Posterior cingulate gyrus (tissue), 11 donors: ENCODE measurements at regions of chr10 and their contacts with region 1.

Region 1: DNA sequence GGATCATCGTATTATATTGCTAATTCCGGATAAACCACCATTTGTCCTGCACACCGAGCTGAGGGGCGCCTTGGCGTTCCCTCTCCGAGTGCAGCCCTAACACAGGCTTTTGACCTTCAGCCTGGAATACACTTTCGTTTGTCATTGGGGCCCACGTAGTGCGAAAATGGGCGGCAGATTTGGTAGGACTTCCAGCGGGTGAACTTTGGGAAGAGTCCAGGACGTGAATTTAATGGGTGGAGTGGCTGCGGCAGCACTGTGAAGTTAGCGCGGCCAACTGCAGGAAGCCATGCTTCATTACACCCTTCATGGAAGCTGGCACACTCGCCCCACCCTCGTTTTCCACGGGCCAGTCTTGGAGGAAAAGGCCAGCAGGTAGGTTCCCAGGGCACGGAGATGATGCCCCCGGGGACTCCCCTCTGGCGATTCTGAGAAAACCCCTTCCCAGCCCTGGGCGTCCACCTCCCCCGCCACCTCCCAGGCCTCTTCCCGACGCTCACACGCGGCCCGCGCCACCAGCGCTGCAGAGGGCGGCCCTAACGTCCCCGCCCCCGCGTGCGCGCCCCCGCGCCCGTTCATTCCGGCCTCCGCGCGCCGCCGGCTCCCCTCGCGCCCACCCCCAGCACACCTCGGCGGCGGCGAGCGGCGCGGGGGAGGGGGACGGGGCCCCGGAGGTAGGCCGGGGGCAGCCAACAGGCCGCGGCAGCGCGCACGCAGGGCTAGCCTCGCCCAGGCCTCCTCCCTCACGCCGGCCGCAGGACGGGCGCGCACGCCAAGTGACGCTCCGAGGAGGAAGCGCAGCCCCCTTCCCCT is at the start of gene MLLT10:
- DNase-seq: peak; percentile 84 to 99 (median 92)

Region 2: DNA sequence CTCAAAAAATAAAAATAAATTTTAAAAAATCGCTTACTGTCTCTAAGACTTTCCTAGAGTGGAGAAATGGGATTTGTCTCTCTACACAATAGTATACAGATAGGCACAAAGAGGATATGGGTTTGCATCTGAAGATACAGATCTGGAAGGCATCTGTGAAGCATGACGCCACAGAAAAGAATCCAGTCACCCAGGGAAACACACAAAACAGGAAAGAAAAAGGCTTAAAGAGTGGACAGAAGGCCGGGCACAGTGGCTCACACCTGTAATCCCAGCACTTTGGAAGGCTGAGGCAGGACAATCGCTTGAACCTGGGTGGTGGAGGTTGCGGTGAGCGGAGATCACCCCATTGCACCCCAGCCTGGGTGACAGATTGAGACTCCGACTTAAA is 69.5 kb before region 1 on chr10:
- intact Hi-C with region 1: no loop called
- DNase-seq: peak in 1 of 10 donors; percentile 43

Region 3: DNA sequence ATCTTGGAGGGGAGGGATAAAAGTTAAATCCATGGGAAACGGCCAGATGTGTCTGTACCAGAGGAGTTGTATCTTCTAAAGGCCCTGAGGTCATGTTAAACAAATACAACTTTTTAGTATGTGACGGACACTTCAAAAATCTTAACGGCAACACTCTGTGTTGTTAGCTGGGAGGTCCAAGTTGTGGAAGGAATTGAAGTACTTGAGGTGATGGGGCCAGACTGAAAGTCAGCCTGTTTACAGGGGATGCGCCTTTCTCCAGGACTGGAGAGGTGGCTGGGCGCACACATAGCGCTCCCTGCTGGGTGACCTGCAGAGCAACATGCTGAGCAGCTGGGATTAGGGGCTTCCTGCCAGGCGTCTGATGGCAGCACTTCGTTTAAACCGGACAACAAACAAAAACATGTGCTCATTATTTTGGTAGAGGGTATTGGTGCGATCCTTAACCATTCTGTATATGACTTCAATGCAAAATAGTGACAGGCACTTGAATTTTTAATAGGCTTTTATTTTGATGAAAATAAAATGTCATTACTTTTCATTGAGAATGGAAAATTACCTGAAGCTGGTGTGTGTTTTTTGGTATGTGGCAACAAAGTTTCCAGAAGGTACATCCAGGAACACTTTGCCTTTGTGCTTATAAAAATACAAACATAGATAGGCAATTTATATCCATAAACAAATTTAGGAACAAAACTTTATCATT is 198.5 kb after region 1 on chr10:
- intact Hi-C with region 1: loop called (anchors 2 kb)
- DNase-seq: peak in 7 of 10 donors; percentile 40 to 94 (median 64)

Region 4: DNA sequence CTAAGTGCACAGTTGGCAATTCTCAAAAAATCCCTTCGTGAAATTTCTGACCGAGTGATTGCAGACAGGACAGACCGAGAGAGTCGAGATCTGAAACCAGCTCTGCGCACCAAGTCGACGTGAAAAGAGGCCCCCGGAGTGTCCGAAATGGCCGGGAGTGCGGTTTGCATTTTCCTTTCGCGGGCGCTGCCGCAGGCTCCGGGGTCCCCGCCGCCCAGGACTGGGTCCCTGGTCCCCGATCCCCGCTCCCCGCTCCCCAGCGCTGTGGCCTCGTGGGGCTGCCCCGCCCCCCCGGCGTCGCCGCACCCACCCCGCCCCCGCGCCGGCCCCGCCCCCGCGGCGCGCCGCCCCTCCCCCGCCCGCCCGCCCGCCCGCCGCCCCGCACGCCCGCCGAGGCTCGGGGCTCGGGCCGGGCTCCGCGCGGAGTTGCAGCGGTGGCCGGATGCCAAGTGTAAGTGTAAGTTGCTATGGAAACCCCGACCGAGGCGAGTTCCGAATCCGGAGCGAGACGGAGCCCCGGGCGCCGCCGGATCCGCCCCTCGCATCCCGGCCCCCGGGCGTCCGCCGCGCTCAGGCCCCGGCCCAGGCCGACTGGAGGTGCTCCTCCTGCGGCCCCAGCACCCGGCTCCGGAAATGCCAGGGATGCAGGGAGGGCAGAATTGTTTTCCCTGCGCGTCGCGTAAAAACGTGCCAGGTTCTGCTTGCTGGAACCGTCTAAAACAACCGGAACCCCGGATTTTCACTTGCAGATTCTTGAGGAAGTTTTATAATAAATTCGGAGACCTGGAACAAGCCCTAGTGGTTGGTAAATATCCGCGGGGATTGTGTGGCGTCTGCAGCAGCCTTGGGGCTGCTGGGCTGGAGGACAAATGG is 791.8 kb after region 1 on chr10:
- intact Hi-C with region 1: loop called (anchors 10 kb)
- DNase-seq: peak; percentile 43 to 93 (median 60)